CD8-positive, alpha-beta T cell (primary cell): ENCODE measurements at regions of chr4 and their contacts with region 1.

Region 1: GRCh38 chr4:47914220-47914925 is at the start of gene NFXL1:
- DNase-seq: peak; percentile 90 to 97 (median 96)
- ATAC-seq: peak; percentile 95
- H3K4me3 ChIP-seq: peak within 1 kb of the TSS; percentile 99 to 100
- H3K4me3 Mint-ChIP-seq: peak within 1 kb of the TSS; percentile 99
- H3K27ac ChIP-seq: peak within 1 kb of the TSS; percentile 81 to 86
- H3K27ac Mint-ChIP-seq: peak within 1 kb of the TSS; percentile 97
- H3K4me1 ChIP-seq: peaks cover 22% of the 10 kb centered on the region
- H3K4me1 Mint-ChIP-seq: peaks cover 32% of the 10 kb centered on the region
- H3K27me3 ChIP-seq: no peaks in the 10 kb centered on the region
- H3K27me3 Mint-ChIP-seq: no peaks in the 10 kb centered on the region
- CTCF ChIP-seq: no peak
- total RNA-seq, gene NFXL1: 6.5 to 8.1 TPM

Region 2: DNA sequence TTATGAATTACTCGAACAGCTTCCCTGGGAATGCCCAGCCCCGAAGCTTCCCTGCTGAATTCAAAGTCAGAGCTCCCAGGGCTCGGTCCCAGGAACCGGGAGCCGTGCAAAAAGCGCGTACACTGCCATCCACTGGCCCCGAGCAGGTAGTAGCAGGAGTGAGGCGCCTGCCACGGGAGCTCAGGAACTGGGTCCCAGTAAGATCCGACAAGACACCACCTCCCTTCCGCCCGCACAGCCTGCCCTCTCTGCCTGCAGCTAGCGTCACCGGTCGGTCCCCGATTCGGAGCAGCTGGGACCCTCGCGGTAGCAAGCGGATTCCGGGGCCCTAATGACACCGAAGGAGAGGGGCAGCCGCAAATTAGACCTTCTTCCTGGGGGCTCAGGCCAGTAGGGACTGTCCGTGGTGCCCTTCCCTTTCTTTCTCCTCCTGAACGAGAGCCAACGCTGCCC is 77.7 kb before region 1 on chr4:
- CTCF ChIA-PET with region 1: no interaction called
- POLR2A ChIA-PET with region 1: no interaction called
- intact Hi-C with region 1: loop called in 1 of 2 experiments (anchors 5 kb)
- DNase-seq: peak in 7 of 9 experiments; percentile 39 to 74 (median 53)
- ATAC-seq: peak; percentile 67
- H3K4me3 ChIP-seq: peak overlapping the region; percentile 66
- H3K4me3 Mint-ChIP-seq: peak overlapping the region; percentile 85
- H3K27ac ChIP-seq: no peak overlapping the region
- H3K27ac Mint-ChIP-seq: peak overlapping the region; percentile 37
- H3K4me1 ChIP-seq: peaks cover 14% of the 10 kb centered on the region
- H3K4me1 Mint-ChIP-seq: peaks cover 25% of the 10 kb centered on the region
- H3K27me3 ChIP-seq: no peaks in the 10 kb centered on the region
- H3K27me3 Mint-ChIP-seq: peaks cover 15% of the 10 kb centered on the region
- CTCF ChIP-seq: peak; percentile 34

Region 3: GRCh38 chr4:48016141-48017103 is 102.0 kb after region 1 on chr4 and contains the starts of genes CNGA1 and NIPAL1:
- CTCF ChIA-PET with region 1: no interaction called
- POLR2A ChIA-PET with region 1: no interaction called
- intact Hi-C with region 1: loop called (anchors 5 kb)
- DNase-seq: peak; percentile 23 to 81 (median 69)
- ATAC-seq: peak; percentile 95
- H3K4me3 ChIP-seq: peak within 1 kb of the TSS; percentile 63 to 68
- H3K4me3 Mint-ChIP-seq: peak within 1 kb of the TSS; percentile 87
- H3K27ac ChIP-seq: no peak within 1 kb of the TSS
- H3K27ac Mint-ChIP-seq: peak within 1 kb of the TSS; percentile 3
- H3K4me1 ChIP-seq: peaks cover 12% of the 10 kb centered on the region
- H3K4me1 Mint-ChIP-seq: peaks cover 9% of the 10 kb centered on the region
- H3K27me3 ChIP-seq: no peaks in the 10 kb centered on the region
- H3K27me3 Mint-ChIP-seq: peaks cover 9% of the 10 kb centered on the region
- CTCF ChIP-seq: no peak
- total RNA-seq, gene CNGA1: not detected
- total RNA-seq, gene NIPAL1: 0.64 to 1.3 TPM

Region 4: GRCh38 chr4:48127682-48128394 is 213.5 kb after region 1 on chr4:
- CTCF ChIA-PET with region 1: no interaction called
- POLR2A ChIA-PET with region 1: no interaction called
- intact Hi-C with region 1: loop called (anchors 5 to 10 kb)
- DNase-seq: peak; percentile 27 to 81 (median 73)
- ATAC-seq: peak; percentile 67
- H3K4me3 ChIP-seq: peak overlapping the region in 1 of 2 experiments; percentile 18
- H3K4me3 Mint-ChIP-seq: peak overlapping the region; percentile 91
- H3K27ac ChIP-seq: peak overlapping the region; percentile 33 to 67
- H3K27ac Mint-ChIP-seq: peak overlapping the region; percentile 92
- H3K4me1 ChIP-seq: peaks cover 76% of the 10 kb centered on the region
- H3K4me1 Mint-ChIP-seq: peaks cover 87% of the 10 kb centered on the region
- H3K27me3 ChIP-seq: no peaks in the 10 kb centered on the region
- H3K27me3 Mint-ChIP-seq: no peaks in the 10 kb centered on the region
- CTCF ChIP-seq: peak; percentile 59

Region 5: GRCh38 chr4:48269861-48270522 is 355.6 kb after region 1 on chr4:
- CTCF ChIA-PET with region 1: no interaction called
- POLR2A ChIA-PET with region 1: no interaction called
- intact Hi-C with region 1: loop called (anchors 2 to 5 kb)
- DNase-seq: peak; percentile 74 to 89 (median 85)
- ATAC-seq: peak; percentile 88
- H3K4me3 ChIP-seq: peak overlapping the region; percentile 68 to 98
- H3K4me3 Mint-ChIP-seq: peak overlapping the region; percentile 96
- H3K27ac ChIP-seq: peak overlapping the region; percentile 47 to 60
- H3K27ac Mint-ChIP-seq: peak overlapping the region; percentile 80
- H3K4me1 ChIP-seq: peaks cover 12% of the 10 kb centered on the region
- H3K4me1 Mint-ChIP-seq: peaks cover 18% of the 10 kb centered on the region
- H3K27me3 ChIP-seq: no peaks in the 10 kb centered on the region
- H3K27me3 Mint-ChIP-seq: no peaks in the 10 kb centered on the region
- CTCF ChIP-seq: no peak